ENCODE measurements at regions of chr1 and their contacts with region 1.

Region 1: DNA sequence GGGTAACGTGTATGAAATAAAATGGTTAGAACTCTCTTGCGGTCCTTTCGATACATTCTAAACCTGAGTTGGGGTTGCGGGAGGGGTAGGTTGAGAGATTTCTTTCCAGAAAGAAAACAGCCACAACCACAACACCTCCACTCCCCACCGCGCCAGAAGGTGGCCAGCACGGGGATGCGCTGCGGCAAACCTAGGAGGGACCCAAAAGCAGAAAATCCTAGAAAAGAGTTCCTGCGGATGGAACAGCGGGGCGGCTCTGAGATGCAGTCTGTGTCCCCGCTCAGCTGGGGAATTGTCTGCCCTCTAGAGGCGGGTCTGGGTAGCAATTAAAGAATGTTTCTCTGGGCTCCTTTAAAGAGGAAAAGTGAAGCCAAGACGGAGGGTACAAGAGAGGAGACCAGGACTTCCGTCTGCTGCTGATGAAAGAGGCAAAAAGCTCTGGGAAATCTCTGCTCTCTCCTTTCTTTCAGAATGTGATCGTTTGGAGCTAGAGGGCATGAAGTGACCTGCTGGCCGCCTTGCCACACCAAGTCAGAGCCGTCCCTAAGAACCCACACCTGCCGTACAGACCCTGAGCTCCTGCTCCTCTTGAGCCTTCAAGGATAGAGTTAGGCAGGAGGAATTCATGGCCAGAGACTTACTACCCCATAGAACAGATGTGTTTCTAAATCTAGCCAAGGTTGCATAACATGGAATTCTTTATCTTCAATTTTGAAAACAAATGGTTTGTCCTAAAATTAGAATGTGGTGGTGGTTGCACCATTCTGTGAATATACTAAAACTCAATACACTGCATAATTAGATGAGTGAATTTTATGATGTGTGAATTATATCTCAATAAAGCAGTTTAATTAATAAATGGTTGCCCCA is 46.5 kb upstream of the COA6 start:
- DNase-seq: peak; percentile 30 to 69 (median 51)
- H3K4me3 ChIP-seq: peak overlapping the region in 1 of 4 donors; percentile 7
- H3K27ac ChIP-seq: no peak overlapping the region
- H3K4me1 ChIP-seq: no peaks in the 10 kb centered on the region
- H3K27me3 ChIP-seq: no peaks in the 10 kb centered on the region
- CTCF ChIP-seq: peak; percentile 40 to 71 (median 62)
- POLR2A ChIP-seq: no peak

Region 2: DNA sequence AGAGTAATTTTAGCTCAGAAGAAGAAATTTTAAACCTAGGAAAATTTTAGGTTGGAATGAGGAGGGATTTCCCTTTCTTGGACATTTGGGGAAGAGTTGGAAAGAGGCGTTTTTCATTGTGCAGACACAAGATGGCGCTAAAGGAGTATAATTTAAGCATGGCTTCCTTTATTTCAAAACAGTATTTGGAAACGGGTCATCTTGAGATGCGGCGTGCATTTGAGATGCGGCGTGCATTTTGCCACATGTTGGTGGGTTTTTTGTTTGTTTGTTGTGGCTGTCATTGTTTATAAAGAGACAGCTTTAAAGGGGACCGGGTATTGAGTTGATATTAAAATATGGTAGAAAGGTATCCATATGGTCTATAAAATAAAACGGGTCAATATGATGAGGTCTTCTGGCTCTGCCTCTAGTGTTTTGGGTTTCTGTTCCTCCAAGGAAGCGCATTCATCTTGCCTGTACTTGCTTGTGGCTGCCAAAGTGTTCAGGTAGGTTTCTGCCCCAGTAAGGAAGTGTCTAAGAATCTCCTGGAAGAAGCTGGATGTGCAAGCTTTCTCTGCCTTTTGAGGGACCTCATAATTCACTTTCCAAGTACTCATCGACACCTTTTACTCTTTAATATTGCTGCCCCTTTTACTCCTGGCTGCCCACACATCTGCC is 212.0 kb before region 1 on chr1:
- intact Hi-C with region 1: loop called in 1 of 2 experiments (anchors 10 kb)
- DNase-seq: peak; percentile 17 to 61 (median 42)
- H3K4me3 ChIP-seq: no peak overlapping the region
- H3K27ac ChIP-seq: no peak overlapping the region
- H3K4me1 ChIP-seq: no peaks in the 10 kb centered on the region
- H3K27me3 ChIP-seq: peaks cover 7% of the 10 kb centered on the region
- CTCF ChIP-seq: peak; percentile 27 to 68 (median 60)
- POLR2A ChIP-seq: no peak

Region 3: GRCh38 chr1:234260578-234260977 is 66.2 kb before region 1 on chr1:
- intact Hi-C with region 1: no loop called
- DNase-seq: no peak
- H3K4me3 ChIP-seq: no peak overlapping the region
- H3K27ac ChIP-seq: no peak overlapping the region
- H3K4me1 ChIP-seq: no peaks in the 10 kb centered on the region
- H3K27me3 ChIP-seq: no peaks in the 10 kb centered on the region
- CTCF ChIP-seq: no peak
- POLR2A ChIP-seq: no peak

Measured in adrenal gland (tissue), 19 donors.